OCI-LY7 (cell line): ENCODE measurements at regions of chr3 and their contacts with region 1.

Region 1: DNA sequence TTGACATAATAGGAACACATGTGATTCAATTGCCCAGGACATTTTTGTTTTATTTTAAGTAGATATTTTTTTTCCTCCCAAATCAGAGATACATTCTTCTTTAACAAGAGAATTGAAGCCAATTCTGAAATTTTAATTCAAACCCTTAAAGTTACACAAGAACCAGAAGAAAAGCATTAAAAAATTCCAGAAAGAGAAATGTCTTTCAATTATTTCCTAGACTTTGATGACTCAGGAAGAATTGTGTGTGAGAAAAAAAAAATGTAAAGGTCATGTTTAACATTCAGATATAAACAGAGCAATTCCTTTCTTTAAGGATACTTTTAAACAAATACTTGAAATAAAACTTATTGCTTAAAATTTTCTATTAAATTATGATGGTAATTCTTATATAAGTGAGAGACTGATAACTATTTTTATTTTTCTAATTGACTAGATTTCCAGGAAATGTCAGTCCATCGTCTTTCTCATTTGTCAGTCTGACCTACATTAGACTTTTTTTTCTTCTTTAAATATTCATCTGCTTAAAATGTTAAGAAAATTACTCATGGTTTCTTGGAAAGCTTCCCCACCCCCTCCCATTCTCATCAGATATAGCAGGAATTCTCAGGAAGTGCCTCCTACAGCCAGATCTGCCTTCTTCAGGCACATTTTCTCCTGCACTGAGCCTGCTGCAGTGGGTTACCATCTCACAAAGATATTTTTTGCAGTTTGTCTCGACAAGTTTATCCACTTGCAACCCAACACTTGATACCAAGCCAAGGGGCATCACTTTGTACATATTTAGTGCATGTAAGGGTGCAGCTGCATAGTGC is 261.8 kb upstream of the CBLB start:
- DNase-seq: no peak
- H3K4me3 ChIP-seq: no peak overlapping the region
- H3K27ac ChIP-seq: no peak overlapping the region
- H3K4me1 ChIP-seq: no peaks in the 10 kb centered on the region
- CTCF ChIP-seq: no peak

Region 2: GRCh38 chr3:106083207-106083606 is 47.4 kb before region 1 on chr3:
- CTCF ChIA-PET with region 1: no interaction called
- POLR2A ChIA-PET with region 1: no interaction called
- intact Hi-C with region 1: no loop called
- DNase-seq: no peak
- H3K4me3 ChIP-seq: no peak overlapping the region
- H3K27ac ChIP-seq: no peak overlapping the region
- H3K4me1 ChIP-seq: no peaks in the 10 kb centered on the region
- CTCF ChIP-seq: no peak

Region 3: GRCh38 chr3:106103383-106103782 is 27.2 kb before region 1 on chr3:
- CTCF ChIA-PET with region 1: no interaction called
- POLR2A ChIA-PET with region 1: no interaction called
- intact Hi-C with region 1: no loop called
- DNase-seq: no peak
- H3K4me3 ChIP-seq: no peak overlapping the region
- H3K27ac ChIP-seq: no peak overlapping the region
- H3K4me1 ChIP-seq: no peaks in the 10 kb centered on the region
- CTCF ChIP-seq: no peak

Region 4: GRCh38 chr3:106161246-106161645 is 30.7 kb after region 1 on chr3:
- CTCF ChIA-PET with region 1: no interaction called
- POLR2A ChIA-PET with region 1: no interaction called
- intact Hi-C with region 1: no loop called
- DNase-seq: no peak
- H3K4me3 ChIP-seq: no peak overlapping the region
- H3K27ac ChIP-seq: no peak overlapping the region
- H3K4me1 ChIP-seq: no peaks in the 10 kb centered on the region
- CTCF ChIP-seq: no peak

Region 5: DNA sequence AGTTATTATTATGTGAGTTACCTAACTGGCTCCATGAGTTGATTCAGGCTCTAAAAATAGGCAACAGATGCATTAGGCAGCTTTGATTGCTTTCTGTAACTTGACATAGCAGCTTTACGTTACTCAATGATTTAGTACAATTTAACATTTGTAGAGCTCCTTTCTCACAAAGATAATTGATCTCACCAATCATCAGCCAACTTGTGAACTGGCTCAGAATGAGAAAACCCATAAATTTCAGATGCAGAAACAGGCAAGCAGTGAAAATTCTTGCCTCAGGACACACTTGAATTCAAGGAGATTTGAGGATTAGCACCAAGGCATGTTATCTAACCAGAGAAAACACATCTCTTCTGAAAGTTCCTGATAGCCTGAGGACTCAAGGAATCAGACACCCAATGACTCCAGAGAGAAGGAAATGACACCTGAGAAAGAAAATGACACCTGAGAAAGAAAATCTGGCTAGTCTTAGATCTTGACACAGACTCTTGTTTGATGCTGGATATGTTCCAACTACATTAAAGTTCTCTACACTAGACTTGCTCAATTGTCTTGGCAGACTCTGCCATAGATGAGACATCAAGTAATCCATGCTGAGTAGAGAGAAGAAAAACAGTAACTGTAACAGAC is 53.3 kb after region 1 on chr3:
- CTCF ChIA-PET with region 1: no interaction called
- POLR2A ChIA-PET with region 1: no interaction called
- intact Hi-C with region 1: no loop called
- DNase-seq: no peak
- H3K4me3 ChIP-seq: no peak overlapping the region
- H3K27ac ChIP-seq: no peak overlapping the region
- H3K4me1 ChIP-seq: no peaks in the 10 kb centered on the region
- CTCF ChIP-seq: no peak

Region 6: DNA sequence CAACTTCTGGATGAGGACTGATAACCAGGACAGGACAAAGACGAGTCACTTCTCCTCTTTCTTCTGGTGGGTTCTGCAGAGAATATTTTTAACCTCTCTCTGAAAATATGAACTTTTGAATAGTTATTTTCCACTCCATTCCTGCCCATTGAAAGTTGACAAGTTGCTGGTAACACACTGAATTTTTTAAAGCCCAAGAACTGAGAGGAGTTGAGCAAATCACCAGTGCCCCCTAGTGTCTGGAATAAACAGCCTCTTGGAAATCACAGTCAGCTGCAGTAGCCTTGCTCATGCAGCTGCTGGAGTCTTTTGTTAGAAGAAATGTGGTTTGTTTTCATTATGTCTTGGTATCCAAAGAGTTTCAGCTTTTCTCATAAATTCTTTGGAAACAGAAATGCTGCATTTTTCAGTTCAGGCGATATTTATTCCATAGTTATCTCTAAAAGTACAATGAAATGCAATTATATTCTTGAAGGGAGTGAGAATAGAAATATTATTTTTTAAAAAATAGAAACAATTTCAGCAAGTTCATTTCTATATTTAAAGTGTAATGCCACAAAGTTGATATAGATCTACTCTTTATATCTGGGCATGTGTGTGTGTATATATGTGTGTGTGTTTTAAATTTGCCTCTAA is 479.2 kb after region 1 on chr3:
- CTCF ChIA-PET with region 1: no interaction called
- POLR2A ChIA-PET with region 1: no interaction called
- intact Hi-C with region 1: loop called (anchors 10 kb)
- DNase-seq: peak; percentile 64
- H3K4me3 ChIP-seq: no peak overlapping the region
- H3K27ac ChIP-seq: no peak overlapping the region
- H3K4me1 ChIP-seq: no peaks in the 10 kb centered on the region
- CTCF ChIP-seq: peak; percentile 95